Activated T-helper 1 cell treated with anti-CD3 and anti-CD28 coated beads, Interleukin-12 subunit alpha, Interleukin-12 subunit beta, Interleukin-2, Interleukin-4 antibody, amounts not matched to agents 30 ng/mL and 10 ng/mL and 1 ng/mL, durations not matched to agents 14 hours and 24 hours and 36 hours (primary cell): ENCODE measurements at regions of chr6 and their contacts with region 1.

Region 1: DNA sequence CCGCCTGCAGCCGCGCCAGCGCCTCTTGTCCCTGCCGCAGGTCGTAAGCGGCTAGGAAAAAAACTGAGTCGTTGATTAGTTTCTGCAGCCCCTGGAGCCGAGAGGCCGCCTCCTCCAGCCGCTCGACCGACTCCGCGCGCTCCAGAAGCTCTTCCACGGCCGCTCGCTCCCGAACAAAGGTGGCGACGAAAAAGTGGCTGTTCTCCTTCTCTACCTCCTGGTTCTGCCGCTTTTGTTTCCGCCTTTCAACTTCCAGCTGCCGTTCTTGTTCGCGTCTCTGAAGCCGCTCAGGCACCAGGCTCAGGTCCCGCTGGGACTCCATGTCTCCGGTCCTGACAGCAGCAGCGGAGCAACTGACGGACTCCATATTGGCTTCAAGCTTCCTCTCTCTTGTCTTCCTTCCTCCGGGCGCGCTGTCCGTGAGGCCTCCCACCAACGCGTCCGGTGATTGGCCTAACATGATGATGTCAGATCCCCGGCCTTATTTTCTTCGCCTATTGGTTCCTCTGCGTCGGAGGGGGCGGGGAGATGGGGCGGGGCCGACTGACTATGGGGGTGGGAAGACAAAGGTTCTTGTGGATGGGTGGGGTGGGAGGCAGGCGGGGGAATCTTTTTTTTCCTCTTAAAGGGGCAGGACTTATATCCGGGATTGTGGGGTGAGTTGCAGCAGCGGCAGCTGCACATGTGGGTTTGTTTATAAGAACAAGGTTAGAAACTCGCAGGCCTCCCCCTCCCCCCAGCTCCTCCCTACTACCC is at the start of gene TBCC:
- DNase-seq: peak; percentile 91
- H3K4me3 Mint-ChIP-seq: peak within 1 kb of the TSS; percentile 100
- H3K27ac Mint-ChIP-seq: peak within 1 kb of the TSS; percentile 100
- H3K4me1 Mint-ChIP-seq: peaks cover 32% of the 10 kb centered on the region
- H3K27me3 Mint-ChIP-seq: no peaks in the 10 kb centered on the region
- total RNA-seq, gene TBCC: 20.1 and 22.3 TPM in 2 replicates

Region 2: DNA sequence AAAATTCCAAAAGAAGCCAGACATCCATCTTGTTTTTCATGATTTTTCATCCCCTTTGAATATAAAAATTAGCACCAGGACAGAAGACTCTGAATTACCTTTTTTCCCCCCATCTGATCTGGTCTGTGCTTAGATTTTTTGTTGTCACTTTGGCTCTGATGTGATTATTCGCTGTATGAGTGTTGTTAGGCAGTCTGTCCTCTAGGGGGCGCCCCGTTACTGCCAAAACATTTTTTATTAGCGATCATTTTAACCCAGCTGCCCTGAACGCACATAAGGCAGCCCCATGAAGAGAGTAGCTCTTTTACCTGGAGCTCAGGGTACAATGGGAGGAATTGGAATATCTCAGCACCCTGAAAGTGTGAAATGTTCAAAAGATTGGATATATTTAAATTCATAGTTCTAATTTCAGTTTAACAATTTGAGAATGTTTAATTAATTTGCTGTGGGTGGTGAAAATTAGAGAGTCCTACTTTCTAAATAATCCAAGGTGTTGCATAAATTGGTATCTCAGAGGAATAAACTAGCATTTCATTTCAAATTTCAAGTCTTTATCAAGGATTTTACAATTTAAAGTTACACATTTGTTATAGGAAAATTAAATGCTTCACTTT is 84.2 kb before region 1 on chr6:
- intact Hi-C with region 1: loop called (anchors 1 kb)
- DNase-seq: peak; percentile 62
- H3K4me3 Mint-ChIP-seq: no peak overlapping the region
- H3K27ac Mint-ChIP-seq: no peak overlapping the region
- H3K4me1 Mint-ChIP-seq: peaks cover 6% of the 10 kb centered on the region
- H3K27me3 Mint-ChIP-seq: no peaks in the 10 kb centered on the region

Region 3: DNA sequence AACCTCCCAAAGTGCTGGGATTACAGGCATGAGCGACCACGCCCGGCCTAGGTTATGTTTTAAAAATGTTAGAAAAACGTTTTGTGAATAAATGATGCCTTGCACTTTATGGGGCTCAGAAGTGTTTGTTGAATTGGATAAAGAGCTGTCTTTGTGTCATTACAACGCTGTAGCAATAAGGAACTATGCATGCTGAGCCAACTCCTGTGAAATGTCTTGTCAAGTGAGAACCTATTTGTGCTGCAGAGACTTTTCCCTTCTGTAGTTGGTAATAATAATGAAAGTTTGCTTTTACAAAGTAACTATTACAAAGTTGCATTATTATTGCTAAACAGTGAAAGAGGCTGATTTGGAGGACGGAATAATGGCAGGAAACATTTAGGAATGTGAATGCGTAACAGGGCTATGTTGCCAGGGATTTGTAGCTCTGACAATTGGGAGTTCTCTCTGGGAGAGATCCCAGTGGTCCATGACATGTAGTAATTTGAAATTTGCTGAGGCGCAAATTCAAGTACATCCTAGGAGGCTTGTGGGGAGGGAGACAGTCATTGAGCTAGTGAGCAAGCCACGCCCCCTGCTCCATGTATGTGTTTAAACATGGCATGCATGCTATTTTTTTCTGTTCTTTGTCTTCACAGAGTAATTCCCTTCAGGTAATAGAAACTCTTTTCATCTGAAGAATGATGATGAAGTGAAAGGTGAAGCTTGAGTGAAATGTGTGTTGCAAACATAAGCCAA is 19.2 kb after region 1 on chr6:
- intact Hi-C with region 1: no loop called
- DNase-seq: no peak
- H3K4me3 Mint-ChIP-seq: no peak overlapping the region
- H3K27ac Mint-ChIP-seq: no peak overlapping the region
- H3K4me1 Mint-ChIP-seq: peaks cover 7% of the 10 kb centered on the region
- H3K27me3 Mint-ChIP-seq: no peaks in the 10 kb centered on the region

Region 4: GRCh38 chr6:42782622-42783176 is 36.8 kb after region 1 on chr6:
- intact Hi-C with region 1: loop called (anchors 1 kb)
- DNase-seq: peak; percentile 48
- H3K4me3 Mint-ChIP-seq: peak overlapping the region; percentile 96
- H3K27ac Mint-ChIP-seq: peak overlapping the region; percentile 98
- H3K4me1 Mint-ChIP-seq: peaks cover 28% of the 10 kb centered on the region
- H3K27me3 Mint-ChIP-seq: no peaks in the 10 kb centered on the region

Region 5: DNA sequence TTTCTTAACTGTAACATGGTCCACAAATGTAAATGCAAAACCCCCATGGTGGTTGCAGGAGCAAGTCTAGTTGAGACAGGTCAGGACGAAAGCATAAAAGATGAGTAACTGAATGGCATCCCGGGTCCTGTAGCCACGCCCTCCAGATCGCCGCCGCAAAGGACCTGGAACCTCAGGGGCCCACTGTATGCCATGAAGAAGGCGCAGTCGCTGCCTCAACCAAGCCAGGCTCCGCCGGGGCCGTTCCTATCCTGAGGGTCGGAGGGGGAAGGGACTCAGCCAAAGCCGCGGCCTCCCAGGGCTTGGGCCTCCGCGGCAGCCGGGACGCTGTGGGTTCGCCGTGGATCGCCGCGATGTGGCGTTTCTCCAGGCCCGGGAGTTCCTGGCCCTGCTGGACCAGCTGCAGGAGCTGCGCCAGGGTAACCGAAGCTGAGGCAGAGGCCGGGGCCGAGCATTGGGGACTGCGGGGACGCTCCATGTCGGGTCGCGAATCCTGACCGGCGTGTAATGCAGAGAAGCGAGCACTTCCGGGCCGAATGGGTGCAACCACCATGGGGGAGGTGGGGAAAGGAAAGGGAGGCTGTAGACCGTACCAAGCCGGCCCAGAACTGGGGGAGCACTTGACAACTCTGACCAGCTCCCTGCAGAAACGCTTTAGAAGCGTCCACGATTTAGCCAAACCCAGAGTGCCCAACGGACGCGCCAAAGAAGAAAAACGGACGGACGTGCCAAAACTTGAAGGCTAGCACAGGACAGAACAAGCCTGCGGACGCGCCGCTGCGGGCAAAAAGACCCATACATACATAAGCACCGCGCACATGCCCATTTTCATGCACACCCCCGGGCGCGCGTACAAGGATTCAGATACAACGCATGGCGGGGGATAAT is 144.7 kb after region 1 on chr6:
- intact Hi-C with region 1: loop called (anchors 1 kb)
- DNase-seq: peak; percentile 86
- H3K4me3 Mint-ChIP-seq: peak overlapping the region; percentile 84
- H3K27ac Mint-ChIP-seq: peak overlapping the region; percentile 89
- H3K4me1 Mint-ChIP-seq: peaks cover 12% of the 10 kb centered on the region
- H3K27me3 Mint-ChIP-seq: no peaks in the 10 kb centered on the region

Region 6: DNA sequence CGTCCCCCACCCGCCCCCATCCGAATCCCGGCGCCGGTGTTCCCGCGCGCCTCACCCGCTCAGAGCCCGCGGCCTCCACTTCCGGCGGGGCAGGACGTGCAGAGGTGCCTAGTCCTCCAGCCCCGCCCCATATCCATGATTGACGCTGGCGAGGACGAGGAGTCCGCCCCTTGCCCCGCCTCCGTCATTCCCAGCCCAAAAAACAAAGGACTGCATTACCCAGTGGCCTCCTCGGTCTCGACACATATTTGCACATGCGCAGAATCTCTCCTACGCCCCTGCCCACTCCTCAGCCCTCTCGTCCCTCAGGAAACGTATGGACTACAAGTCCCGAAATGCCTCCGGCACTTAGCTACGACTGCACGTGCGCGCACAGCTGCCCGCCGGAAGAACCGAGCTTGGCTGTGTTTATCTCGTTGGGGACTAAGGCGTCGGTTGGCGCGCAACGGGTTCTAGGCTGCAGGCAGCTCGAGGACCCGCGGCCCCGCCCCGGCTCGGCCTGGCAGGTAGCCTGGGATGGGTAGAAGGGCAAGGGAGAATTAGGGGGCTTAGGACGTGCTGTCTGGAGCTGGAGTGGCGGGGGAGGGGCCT is 268.1 kb after region 1 on chr6 and contains the starts of genes KLHDC3 and MEA1:
- intact Hi-C with region 1: loop called (anchors 1 kb)
- DNase-seq: peak; percentile 99
- H3K4me3 Mint-ChIP-seq: peak within 1 kb of the TSS; percentile 93
- H3K27ac Mint-ChIP-seq: peak within 1 kb of the TSS; percentile 78
- H3K4me1 Mint-ChIP-seq: peaks cover 41% of the 10 kb centered on the region
- H3K27me3 Mint-ChIP-seq: peaks cover 2% of the 10 kb centered on the region
- total RNA-seq, gene KLHDC3: 76.6 and 77.0 TPM in 2 replicates
- total RNA-seq, gene MEA1: 89.3 and 92.7 TPM in 2 replicates